Caco-2 (cell line): ENCODE measurements at regions of chr7 and their contacts with region 1.

Region 1: GRCh38 chr7:144513334-144513733 is 109.8 kb upstream of the NOBOX start:
- DNase-seq: peak in 1 of 2 experiments; percentile 39
- H3K4me3 ChIP-seq: no peak overlapping the region
- H3K4me3 Mint-ChIP-seq: no peak overlapping the region
- H3K27ac Mint-ChIP-seq: no peak overlapping the region
- H3K4me1 ChIP-seq: no peaks in the 10 kb centered on the region
- H3K4me1 Mint-ChIP-seq: no peaks in the 10 kb centered on the region
- H3K27me3 ChIP-seq: no peaks in the 10 kb centered on the region
- H3K27me3 Mint-ChIP-seq: no peaks in the 10 kb centered on the region
- CTCF ChIP-seq: peak in 1 of 2 experiments; percentile 61

Region 2: GRCh38 chr7:144454256-144455039 is 58.9 kb before region 1 on chr7:
- CTCF ChIA-PET with region 1: no interaction called
- POLR2A ChIA-PET with region 1: no interaction called
- intact Hi-C with region 1: no loop called
- DNase-seq: peak in 1 of 2 experiments; percentile 10
- H3K4me3 ChIP-seq: no peak overlapping the region
- H3K4me3 Mint-ChIP-seq: no peak overlapping the region
- H3K27ac Mint-ChIP-seq: no peak overlapping the region
- H3K4me1 ChIP-seq: no peaks in the 10 kb centered on the region
- H3K4me1 Mint-ChIP-seq: no peaks in the 10 kb centered on the region
- H3K27me3 ChIP-seq: no peaks in the 10 kb centered on the region
- H3K27me3 Mint-ChIP-seq: no peaks in the 10 kb centered on the region
- CTCF ChIP-seq: peak in 1 of 2 experiments; percentile 24

Region 3: DNA sequence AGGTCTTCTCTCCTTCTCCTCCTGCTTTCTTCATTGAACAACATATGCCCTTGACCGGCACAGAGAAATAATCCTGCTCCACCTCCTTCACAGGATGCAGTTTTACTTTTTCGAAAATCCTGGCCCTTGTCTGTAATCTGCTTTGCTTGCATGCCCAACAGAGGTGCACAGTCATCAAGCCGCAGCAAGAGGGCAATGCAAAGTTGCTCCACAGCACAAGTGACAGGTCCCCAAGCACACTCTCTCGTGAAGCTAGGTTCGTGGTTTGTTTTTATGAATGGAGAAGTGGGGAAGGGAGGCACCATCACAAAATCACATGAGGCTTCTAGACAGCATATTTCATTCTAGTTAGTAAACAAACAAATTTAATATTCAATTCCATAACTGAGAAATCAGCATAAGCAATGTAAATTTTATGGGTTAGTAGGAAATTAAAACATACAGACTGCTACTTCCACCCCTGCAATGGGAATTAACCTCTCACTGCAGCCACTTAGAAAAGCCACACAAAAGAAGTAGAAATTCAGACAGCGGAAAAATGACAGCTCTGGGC is 143.7 kb after region 1 on chr7:
- CTCF ChIA-PET with region 1: no interaction called
- POLR2A ChIA-PET with region 1: no interaction called
- intact Hi-C with region 1: loop called (anchors 10 kb)
- DNase-seq: peak in 1 of 2 experiments; percentile 14
- H3K4me3 ChIP-seq: no peak overlapping the region
- H3K4me3 Mint-ChIP-seq: no peak overlapping the region
- H3K27ac Mint-ChIP-seq: no peak overlapping the region
- H3K4me1 ChIP-seq: no peaks in the 10 kb centered on the region
- H3K4me1 Mint-ChIP-seq: no peaks in the 10 kb centered on the region
- H3K27me3 ChIP-seq: no peaks in the 10 kb centered on the region
- H3K27me3 Mint-ChIP-seq: no peaks in the 10 kb centered on the region
- CTCF ChIP-seq: peak in 1 of 2 experiments; percentile 6

Region 4: DNA sequence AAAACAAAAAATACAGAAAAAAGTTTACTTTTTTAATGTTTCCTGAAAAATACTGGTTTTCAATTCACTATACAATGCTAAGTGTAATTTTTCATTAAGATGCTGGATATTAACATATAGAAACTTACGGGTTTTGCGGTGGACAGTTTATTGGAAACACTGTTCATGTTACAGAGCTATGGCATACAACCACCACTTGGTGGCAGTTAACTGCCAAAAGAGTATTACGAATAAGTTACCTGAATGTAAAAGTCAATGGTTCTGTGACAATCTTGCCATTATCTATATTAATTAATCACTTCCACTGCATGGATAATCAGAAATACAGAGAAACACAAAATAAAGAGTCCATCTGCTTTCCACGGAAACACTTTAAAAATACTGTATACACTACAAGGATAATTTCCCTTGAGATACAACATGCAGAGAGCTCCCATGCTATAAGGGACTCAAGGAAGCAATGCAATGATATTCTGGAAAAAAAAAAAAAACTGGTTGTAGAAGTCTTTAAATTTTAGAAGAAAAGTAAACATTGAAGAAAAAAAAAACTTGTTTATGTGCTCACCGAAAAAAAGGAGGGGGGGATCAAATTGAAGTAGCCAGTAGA is 225.5 kb after region 1 on chr7:
- CTCF ChIA-PET with region 1: no interaction called
- POLR2A ChIA-PET with region 1: no interaction called
- intact Hi-C with region 1: loop called (anchors 5 kb)
- DNase-seq: peak in 1 of 2 experiments; percentile 32
- H3K4me3 ChIP-seq: no peak overlapping the region
- H3K4me3 Mint-ChIP-seq: no peak overlapping the region
- H3K27ac Mint-ChIP-seq: no peak overlapping the region
- H3K4me1 ChIP-seq: peaks cover 4% of the 10 kb centered on the region; the same call in 1 of the 2 replicates
- H3K4me1 Mint-ChIP-seq: peaks cover 27% of the 10 kb centered on the region
- H3K27me3 ChIP-seq: no peaks in the 10 kb centered on the region
- H3K27me3 Mint-ChIP-seq: no peaks in the 10 kb centered on the region
- CTCF ChIP-seq: peak; percentile 63 to 73

Region 5: DNA sequence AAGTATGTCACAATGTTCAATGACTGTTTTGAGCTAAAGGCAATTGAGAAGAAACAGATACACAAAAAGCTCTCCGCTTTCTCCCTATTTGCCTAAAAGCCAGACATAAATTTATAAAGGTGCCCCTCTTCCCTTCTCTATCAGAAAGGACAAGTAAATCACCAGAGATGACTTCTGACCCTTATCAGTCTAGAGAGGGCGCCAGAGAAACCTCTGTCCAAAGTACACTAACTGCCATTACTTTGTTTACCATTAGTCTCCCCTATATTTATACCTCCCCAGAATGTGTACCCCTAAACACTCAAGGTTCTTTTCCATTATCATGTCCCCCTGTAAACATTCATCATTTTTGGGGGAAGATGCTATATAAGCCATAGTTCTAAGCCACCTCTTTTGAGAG is 273.2 kb after region 1 on chr7:
- CTCF ChIA-PET with region 1: no interaction called
- POLR2A ChIA-PET with region 1: no interaction called
- intact Hi-C with region 1: loop called (anchors 1 kb)
- DNase-seq: no peak
- H3K4me3 ChIP-seq: no peak overlapping the region
- H3K4me3 Mint-ChIP-seq: no peak overlapping the region
- H3K27ac Mint-ChIP-seq: no peak overlapping the region
- H3K4me1 ChIP-seq: peaks cover 22% of the 10 kb centered on the region
- H3K4me1 Mint-ChIP-seq: peaks cover 6% of the 10 kb centered on the region
- H3K27me3 ChIP-seq: no peaks in the 10 kb centered on the region
- H3K27me3 Mint-ChIP-seq: no peaks in the 10 kb centered on the region
- CTCF ChIP-seq: peak; percentile 6 to 10

Region 6: GRCh38 chr7:145016068-145016467 is 502.7 kb after region 1 on chr7:
- CTCF ChIA-PET with region 1: no interaction called
- POLR2A ChIA-PET with region 1: no interaction called
- intact Hi-C with region 1: loop called (anchors 5 kb)
- DNase-seq: peak; percentile 24 to 38
- H3K4me3 ChIP-seq: no peak overlapping the region
- H3K4me3 Mint-ChIP-seq: peak overlapping the region; percentile 41
- H3K27ac Mint-ChIP-seq: no peak overlapping the region
- H3K4me1 ChIP-seq: no peaks in the 10 kb centered on the region
- H3K4me1 Mint-ChIP-seq: no peaks in the 10 kb centered on the region
- H3K27me3 ChIP-seq: no peaks in the 10 kb centered on the region
- H3K27me3 Mint-ChIP-seq: no peaks in the 10 kb centered on the region
- CTCF ChIP-seq: peak in 1 of 2 experiments; percentile 44

Region 7: DNA sequence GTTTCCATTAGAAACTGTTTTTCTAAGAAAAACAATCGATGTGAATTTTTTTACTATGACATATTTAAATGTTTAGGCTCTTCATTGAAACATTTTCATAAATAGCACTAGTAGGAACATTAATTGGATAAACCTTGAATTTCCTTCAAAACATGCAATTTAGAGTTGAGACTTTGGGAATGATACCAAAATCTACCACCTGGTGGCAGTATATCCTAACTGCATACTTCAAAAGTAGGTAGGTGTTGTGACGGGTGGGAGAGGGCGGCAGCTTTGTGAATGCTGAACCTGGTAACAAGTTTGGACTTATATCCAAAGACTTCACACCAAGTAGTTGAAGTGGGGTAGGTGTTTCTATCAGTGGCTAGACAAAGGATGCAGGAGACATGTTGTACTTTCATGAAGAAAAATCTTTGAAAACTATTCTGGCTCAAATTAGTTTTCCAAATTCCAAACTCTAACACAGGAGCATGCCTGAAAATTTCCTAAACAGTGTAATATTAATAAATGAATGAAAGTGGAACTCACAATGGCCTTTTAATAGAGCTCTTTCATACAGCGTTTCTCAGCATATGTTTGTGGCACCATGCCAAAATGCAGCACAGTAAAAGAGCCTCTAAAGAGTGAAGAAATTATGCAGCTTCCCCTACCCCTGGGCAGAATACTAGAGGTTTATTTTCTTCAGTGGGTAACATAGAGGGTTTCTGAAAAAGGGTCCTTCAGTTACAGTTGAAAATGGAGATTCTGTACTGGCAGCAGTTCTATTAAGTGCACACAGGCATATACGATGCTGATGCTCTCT is 523.5 kb after region 1 on chr7:
- CTCF ChIA-PET with region 1: no interaction called
- POLR2A ChIA-PET with region 1: no interaction called
- intact Hi-C with region 1: loop called (anchors 1 kb)
- DNase-seq: peak; percentile 43 to 69
- H3K4me3 ChIP-seq: no peak overlapping the region
- H3K4me3 Mint-ChIP-seq: no peak overlapping the region
- H3K27ac Mint-ChIP-seq: no peak overlapping the region
- H3K4me1 ChIP-seq: no peaks in the 10 kb centered on the region
- H3K4me1 Mint-ChIP-seq: no peaks in the 10 kb centered on the region
- H3K27me3 ChIP-seq: no peaks in the 10 kb centered on the region
- H3K27me3 Mint-ChIP-seq: peaks cover 11% of the 10 kb centered on the region
- CTCF ChIP-seq: peak; percentile 70 to 78